Activated CD8-positive, alpha-beta memory T cell treated with anti-CD3 and anti-CD28 coated beads, Interleukin-2, amount 10 ng/mL, durations not matched to agents 7 days and 5 days (primary cell): ENCODE measurements at regions of chr19 and their contacts with region 1.

Region 1: DNA sequence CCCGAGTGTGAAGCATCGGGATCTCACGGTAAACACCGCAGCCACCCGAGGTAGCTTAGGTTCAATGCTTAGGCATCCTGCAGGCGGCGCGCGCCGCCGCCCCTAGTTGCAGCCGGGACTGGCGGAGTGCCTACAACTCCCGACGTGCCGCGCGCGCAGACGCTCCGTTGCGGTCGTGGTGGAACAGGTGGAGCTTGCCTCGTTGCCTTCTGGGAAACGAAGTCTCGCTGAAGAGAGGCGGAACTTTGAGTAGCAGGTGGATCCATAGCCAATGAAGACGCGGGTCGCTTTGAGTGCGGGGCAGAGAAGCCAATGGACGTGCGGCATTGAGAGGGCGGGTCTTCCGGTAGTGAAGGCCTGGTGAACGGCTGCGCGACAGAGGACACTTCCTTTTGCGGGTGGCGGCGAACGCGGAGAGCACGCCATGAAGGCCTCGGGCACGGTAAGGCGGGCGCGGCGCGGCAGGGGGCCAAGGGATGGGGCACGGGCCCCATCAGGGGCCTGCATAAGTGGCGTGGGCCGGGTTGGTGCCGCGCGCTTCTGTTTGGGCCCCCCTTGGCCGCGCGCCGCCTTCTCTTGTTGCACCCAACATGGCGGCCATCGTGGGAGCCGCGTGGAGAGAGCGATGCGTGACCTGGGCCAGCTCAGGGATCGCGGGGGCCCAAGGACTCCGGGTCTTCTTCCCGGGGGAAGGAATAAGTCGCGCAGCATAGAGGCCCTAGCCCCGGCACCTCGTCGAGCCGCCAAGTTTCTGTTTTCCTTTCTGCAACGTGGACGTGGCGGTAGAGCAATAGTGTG is at the start of gene RPL18A:
- DNase-seq: peak; percentile 100
- ATAC-seq: peak; percentile 97
- H3K4me3 Mint-ChIP-seq: peak within 1 kb of the TSS; percentile 94
- H3K27ac Mint-ChIP-seq: peak within 1 kb of the TSS; percentile 93
- H3K4me1 Mint-ChIP-seq: peaks cover 37% of the 10 kb centered on the region
- H3K27me3 Mint-ChIP-seq: no peaks in the 10 kb centered on the region
- total RNA-seq, gene RPL18A: 1,945 to 2,182 TPM

Region 2: DNA sequence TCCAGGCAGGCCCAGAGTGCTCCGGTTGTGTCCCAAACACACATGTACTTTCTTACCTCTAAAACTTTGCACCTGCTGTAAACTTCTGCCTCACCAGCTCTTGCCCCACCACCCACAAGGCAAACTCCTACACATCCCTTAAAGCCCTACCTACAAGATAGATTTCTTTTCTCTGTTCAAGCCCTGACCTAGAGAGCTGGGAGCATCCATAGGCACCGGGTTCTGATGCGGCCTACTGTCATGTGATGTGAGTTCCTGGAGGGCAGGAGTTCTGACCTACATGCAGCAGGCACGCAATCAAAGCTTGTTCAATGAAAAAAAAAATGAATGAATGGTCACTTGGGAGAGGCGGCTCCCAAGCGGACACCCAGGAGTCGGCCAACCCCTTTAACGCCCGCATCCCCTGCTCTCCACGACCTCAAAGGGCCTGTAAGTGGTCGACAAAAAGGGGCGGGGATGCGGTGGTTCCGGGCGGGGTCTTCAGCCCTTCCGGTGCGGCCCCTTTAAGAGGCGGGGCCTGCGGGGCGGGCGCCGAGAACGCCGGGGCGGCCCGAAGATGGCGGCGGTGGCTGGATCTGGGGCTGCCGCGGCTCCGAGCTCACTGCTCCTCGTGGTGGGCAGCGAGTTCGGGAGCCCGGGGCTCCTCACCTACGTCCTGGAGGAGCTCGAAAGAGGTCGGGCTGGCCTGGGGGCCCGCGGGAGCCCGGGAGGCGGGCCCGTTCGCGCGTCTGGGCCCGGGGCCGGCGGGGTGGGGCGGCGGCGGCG is 140.6 kb before region 1 on chr19 and contains the start of gene MAP1S:
- CTCF ChIA-PET with region 1: interaction called, 12 read pairs
- DNase-seq: peak; percentile 77
- ATAC-seq: peak; percentile 93
- H3K4me3 Mint-ChIP-seq: peak within 1 kb of the TSS; percentile 82
- H3K27ac Mint-ChIP-seq: peak within 1 kb of the TSS; percentile 78
- H3K4me1 Mint-ChIP-seq: peaks cover 36% of the 10 kb centered on the region
- H3K27me3 Mint-ChIP-seq: no peaks in the 10 kb centered on the region
- total RNA-seq, gene MAP1S: 67.3 to 69.1 TPM

Region 3: DNA sequence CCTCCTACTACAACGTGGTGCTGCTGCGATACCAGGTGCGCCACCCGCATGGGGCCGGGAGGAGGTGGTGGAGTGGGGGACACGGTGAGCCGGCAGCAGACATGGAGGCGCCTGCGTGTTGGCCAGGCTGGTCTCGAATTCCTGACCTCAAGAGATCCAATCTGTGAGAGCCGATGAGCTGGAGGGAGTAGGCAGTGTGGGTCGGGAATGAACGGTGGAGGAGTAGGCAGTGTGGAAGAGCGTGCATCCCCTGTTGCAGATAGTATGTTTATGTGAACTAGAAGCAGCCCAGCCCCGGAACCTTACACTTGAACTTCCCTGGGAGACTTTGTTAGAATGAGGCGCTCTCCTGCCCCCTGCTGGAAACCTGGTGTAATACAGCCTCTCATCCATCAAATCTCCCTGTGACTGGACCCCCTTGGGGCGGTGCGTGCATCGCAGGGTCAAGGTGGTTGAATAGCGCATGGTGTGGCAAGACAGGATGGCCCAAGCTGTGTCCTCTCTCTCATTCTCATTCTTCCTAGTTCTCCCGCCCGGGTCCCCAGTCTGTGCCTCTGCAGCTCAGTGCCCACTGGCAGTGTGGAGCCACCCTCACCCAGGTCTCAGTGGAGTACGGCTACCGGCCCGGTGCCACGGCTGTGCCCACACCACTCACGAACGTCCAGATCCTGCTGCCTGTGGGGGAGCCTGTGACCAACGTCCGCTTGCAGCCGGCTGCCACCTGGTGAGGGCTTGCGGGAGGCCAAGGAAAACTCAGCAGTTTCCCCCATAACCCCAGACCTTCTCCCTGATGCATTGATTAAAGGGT is 75.3 kb before region 1 on chr19:
- CTCF ChIA-PET with region 1: interaction called, 10 read pairs
- DNase-seq: peak; percentile 82
- ATAC-seq: peak; percentile 66
- H3K4me3 Mint-ChIP-seq: no peak overlapping the region
- H3K27ac Mint-ChIP-seq: no peak overlapping the region
- H3K4me1 Mint-ChIP-seq: peaks cover 3% of the 10 kb centered on the region
- H3K27me3 Mint-ChIP-seq: no peaks in the 10 kb centered on the region

Region 4: GRCh38 chr19:17803264-17803922 is 56.3 kb before region 1 on chr19:
- CTCF ChIA-PET with region 1: interaction called, 11 read pairs
- DNase-seq: peak; percentile 75
- ATAC-seq: peak; percentile 69
- H3K4me3 Mint-ChIP-seq: no peak overlapping the region
- H3K27ac Mint-ChIP-seq: peak overlapping the region; percentile 85
- H3K4me1 Mint-ChIP-seq: peaks cover 38% of the 10 kb centered on the region
- H3K27me3 Mint-ChIP-seq: peaks cover 19% of the 10 kb centered on the region

Region 5: DNA sequence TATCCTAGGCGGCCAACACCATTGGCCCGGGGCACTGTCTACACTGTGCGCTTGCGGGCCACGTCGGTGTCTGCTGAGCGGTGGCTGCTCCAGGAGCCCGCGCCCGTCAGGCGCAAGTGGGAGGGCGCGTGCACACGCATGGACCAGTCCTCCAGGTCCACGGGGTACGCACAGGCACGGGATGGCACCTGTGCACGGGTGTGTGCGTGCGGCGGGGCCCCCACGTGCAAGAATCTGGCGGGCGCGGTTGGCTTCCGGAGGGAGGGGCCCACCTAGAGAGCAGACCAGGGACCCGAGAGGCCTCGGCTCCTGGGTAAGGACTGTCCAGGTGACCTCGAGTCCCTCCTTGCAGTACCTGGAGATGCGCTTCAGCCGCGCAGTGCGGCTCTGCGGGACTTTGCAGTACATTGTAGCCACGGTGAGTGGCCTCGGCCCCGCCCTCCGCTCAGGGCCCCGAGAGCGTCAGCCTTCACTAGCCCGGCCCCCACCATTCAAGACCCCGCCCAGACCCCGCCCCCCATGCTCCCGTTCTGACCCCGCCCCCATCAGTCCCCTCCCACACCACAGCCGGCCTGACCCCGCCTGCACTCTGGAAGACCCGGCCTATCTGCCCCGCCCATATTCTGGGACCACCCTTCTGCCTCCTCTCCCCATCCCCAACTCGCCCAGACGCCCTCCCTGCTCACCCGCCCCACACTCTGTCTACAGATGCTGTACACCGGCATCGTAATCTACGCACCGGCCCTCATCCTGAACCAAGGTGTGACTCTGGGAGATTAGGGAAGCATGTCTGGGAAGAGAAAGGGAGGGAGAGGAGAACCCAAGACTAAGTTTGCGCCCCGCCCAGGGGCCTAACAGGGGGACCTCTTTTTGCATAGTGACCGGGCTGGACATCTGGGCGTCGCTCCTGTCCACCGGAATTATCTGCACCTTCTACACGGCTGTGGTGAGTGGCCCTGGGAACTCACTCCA is 14.3 kb after region 1 on chr19:
- CTCF ChIA-PET with region 1: interaction called, 34 read pairs
- DNase-seq: peak; percentile 76
- ATAC-seq: peak; percentile 75
- H3K4me3 Mint-ChIP-seq: peak overlapping the region; percentile 67
- H3K27ac Mint-ChIP-seq: peak overlapping the region; percentile 67
- H3K4me1 Mint-ChIP-seq: peaks cover 22% of the 10 kb centered on the region
- H3K27me3 Mint-ChIP-seq: peaks cover 2% of the 10 kb centered on the region

Region 6: GRCh38 chr19:18000935-18001778 is 141.4 kb after region 1 on chr19:
- CTCF ChIA-PET with region 1: interaction called, 18 read pairs
- DNase-seq: peak; percentile 95
- ATAC-seq: peak; percentile 87
- H3K4me3 Mint-ChIP-seq: peak overlapping the region; percentile 82
- H3K27ac Mint-ChIP-seq: peak overlapping the region; percentile 99
- H3K4me1 Mint-ChIP-seq: peaks cover 26% of the 10 kb centered on the region
- H3K27me3 Mint-ChIP-seq: no peaks in the 10 kb centered on the region